HEK293T (cell line): ENCODE measurements at regions of chr4 and their contacts with region 1.

Region 1: DNA sequence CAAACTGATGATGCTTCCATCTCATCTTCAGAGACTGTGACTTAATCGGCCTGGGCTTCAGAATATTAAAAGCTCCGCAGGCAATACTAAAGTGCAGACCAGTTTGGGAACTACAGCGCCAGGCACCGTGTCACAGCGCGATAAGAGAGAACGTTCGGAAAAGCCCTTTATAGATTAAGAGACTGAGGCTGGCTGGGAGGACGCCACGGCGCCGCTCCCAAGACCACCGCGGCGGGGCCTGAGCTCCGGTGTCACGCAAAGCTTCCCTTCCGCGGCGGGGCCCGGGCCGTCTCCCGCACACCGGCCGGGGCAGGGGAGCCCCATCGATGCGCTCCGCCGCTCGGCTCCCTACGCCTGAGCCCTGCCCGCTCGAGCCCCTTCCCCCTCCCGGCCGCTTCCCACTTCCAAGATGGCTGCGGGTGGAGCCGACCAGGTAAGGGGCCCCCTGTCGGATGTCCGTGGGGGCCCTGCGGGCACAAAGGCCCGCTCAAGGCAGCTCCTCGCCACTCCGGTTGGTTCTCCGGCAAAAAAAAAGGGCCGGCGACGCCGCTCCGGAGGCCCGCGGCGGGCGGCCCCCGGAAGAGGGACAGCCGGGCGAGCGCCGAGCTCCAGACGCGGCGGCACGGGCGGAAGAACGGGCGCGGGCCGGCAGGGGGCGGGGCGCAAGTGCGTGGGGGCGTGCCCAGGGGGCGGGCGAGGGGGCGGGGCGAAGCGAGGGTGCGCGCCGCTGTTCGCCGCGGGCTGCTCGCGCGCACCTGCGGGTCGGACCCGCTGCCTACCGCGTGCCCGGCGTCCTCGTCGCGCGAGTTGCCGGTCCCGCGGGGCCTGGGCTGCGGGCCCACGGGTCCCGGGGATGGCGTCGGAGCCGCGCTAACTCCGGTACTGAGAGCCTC is at the start of gene TBC1D14:
- DNase-seq: peak; percentile 96

Region 2: GRCh38 chr4:6327041-6327917 is 582.0 kb before region 1 on chr4:
- CTCF ChIA-PET with region 1: no interaction called
- POLR2A ChIA-PET with region 1: no interaction called
- DNase-seq: peak; percentile 89

Region 3: DNA sequence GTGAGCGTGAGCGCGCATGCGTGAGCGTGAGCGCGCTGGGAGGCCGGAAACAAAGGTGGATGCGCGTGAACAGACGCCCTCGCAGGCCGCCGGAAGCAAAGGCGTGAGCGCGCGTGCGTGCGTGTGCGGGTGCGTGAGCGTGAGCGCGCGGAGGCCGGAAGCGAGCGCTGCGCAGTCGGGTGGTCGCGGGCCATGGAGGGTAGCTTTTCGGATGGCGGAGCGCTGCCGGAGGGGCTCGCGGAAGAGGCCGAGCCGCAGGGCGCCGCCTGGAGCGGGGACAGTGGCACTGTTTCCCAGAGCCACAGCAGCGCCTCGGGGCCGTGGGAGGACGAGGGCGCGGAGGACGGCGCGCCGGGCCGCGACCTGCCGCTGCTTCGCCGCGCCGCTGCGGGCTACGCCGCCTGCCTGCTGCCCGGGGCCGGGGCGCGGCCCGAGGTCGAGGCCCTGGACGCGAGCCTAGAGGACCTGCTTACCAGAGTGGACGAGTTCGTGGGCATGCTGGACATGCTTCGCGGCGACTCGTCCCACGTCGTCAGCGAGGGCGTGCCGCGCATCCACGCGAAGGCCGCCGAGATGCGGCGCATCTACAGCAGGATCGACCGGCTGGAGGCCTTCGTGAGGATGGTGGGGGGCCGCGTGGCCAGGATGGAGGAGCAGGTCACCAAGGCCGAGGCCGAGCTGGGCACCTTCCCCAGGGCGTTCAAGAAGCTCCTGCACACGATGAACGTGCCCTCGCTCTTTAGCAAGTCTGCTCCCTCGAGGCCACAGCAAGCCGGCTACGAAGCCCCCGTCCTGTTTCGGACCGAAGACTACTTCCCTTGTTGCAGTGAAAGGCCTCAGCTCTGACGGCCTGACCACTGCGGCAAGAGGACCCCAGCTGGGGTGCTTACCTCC is 193.1 kb before region 1 on chr4 and contains the start of gene BLOC1S4:
- CTCF ChIA-PET with region 1: interaction called, 5 read pairs
- POLR2A ChIA-PET with region 1: interaction called, 10 read pairs
- DNase-seq: peak; percentile 96

Region 4: GRCh38 chr4:6885951-6886557 is 23.3 kb before region 1 on chr4:
- CTCF ChIA-PET with region 1: interaction called, 3 read pairs
- POLR2A ChIA-PET with region 1: interaction called, 11 read pairs
- DNase-seq: no peak

Region 5: DNA sequence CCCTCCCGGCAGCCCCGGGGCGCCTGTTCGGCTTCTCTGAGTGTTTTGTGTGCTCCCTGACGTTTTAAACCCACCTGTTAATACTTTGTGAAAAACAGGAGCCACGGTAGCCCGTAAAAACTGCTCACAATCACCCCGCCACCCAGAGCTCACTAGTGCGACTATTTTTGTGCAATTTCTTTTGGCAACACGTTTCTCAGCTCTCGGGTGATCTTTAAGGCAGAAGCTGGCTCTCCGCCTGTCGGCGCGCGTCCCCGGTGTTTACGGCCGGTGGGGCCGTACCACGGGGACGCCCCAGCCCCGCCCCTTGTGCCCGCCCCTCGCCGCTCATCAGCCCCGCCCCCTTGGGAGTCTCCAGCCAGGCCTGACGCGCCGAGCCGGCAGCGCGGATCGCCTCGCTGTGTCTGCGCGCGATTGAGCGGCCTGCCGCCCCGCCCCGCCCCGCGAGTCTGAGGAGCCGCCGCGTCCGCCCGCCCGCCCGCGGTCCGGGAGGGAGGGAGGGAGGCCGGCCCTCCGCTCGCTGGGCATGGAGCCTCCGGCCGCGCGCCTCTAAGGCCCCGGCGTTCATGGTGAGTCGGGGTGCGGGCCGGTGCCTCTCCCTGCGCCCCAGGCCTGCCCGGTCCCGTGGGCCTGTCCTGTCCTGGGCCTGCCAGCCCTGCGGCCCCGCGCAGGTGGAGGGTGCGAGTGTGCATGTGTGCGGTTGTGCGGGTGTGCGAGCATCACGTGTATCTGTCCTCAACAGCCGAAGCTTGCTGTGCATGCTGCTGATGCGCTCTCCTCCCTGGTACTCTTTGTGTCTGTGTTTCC is 77.7 kb after region 1 on chr4:
- CTCF ChIA-PET with region 1: no interaction called
- POLR2A ChIA-PET with region 1: interaction called, 18 read pairs
- DNase-seq: peak; percentile 99